ENCODE measurements at regions of chr16 and their contacts with region 1.

Region 1: GRCh38 chr16:28277537-28278388 is 14.6 kb upstream of the SBK1 start:
- DNase-seq: peak; percentile 91 to 94
- H3K4me3 ChIP-seq: peak overlapping the region; percentile 35 to 51 (median 43)
- H3K27ac ChIP-seq: no peak overlapping the region
- H3K4me1 ChIP-seq: peaks cover 5 to 11% (median 10%) of the 10 kb centered on the region in 4 donors
- H3K27me3 ChIP-seq: peaks cover 0 to 57% (median 26%) of the 10 kb centered on the region in 3 donors
- CTCF ChIP-seq: peak in 6 of 7 experiments; percentile 69 to 98 (median 96)
- EP300 ChIP-seq: no peak
- POLR2A ChIP-seq: no peak

Region 2: GRCh38 chr16:28317040-28317880 is 39.5 kb after region 1 on chr16:
- intact Hi-C with region 1: loop called (anchors 5 kb)
- DNase-seq: peak; percentile 65 to 77
- H3K4me3 ChIP-seq: no peak overlapping the region
- H3K27ac ChIP-seq: no peak overlapping the region
- H3K4me1 ChIP-seq: no peaks in the 10 kb centered on the region
- H3K27me3 ChIP-seq: peaks cover 0 to 11% (median 0%) of the 10 kb centered on the region in 3 donors
- CTCF ChIP-seq: peak in 5 of 7 experiments; percentile 43 to 85 (median 79)
- EP300 ChIP-seq: no peak
- POLR2A ChIP-seq: no peak

Measured in stomach (tissue), 19 donors.